Aorta (tissue), 5 donors: ENCODE measurements at regions of chr18 and their contacts with region 1.

Region 1: DNA sequence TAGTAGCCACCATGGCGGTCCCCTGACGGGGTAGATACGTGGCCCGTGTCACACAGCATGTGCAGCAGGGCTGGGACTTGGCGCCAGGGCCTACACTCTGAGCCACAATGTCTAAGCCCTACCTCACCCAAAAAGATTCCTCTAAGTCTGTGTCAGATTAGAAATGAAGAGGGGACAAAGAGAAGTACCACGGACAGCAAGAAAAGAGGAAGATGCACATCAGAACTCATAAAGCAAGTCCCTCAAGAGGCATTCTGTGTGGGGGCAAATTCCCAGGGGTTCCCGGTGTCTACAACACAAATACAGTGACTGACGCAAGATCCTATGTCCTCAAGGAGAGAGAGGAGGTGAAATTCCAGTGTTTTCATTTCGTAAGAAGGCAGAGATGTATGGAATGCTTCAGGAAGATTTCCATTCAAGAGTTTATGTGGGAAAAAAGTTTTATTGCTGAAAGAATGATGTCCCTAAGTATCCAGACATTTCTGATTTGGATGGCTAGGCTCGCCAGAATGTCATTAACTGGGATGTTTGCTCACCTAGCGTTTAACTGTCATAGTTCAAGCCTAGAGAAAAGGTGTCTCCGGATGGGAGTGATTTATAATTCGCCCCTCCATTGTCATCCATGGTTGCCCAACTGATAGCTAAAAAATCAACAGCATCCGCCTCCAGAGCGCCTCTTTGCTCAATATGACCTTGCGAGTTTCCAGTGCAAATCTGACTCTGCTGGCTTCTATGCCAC is 75.6 kb upstream of the CHMP1B start:
- DNase-seq: no peak
- ATAC-seq: no peak
- H3K4me3 ChIP-seq: no peak overlapping the region
- H3K27ac ChIP-seq: no peak overlapping the region
- H3K4me1 ChIP-seq: no peaks in the 10 kb centered on the region
- H3K27me3 ChIP-seq: no peaks in the 10 kb centered on the region

Region 2: DNA sequence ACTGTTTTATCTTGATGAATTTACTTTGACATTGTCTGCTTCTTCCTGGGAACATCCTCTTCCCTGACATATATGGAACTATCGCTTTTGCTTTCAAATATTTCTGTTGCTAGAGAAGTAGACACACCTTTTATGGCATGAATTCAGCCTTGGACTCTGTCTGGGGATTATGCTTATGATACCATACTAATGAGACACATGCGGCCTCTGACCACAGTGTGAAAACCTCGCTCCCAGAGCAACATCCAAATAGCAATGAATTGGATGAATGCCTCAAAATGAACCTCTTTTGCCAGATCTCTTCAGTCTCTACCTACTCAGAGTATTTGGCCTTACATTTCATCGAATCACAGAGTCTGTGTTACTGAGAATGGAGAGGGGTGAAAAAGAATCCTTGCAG is 697.1 kb before region 1 on chr18:
- intact Hi-C with region 1: no loop called
- DNase-seq: no peak
- ATAC-seq: no peak
- H3K4me3 ChIP-seq: no peak overlapping the region
- H3K27ac ChIP-seq: no peak overlapping the region
- H3K4me1 ChIP-seq: no peaks in the 10 kb centered on the region
- H3K27me3 ChIP-seq: no peaks in the 10 kb centered on the region

Region 3: GRCh38 chr18:11695736-11696135 is 79.9 kb before region 1 on chr18:
- intact Hi-C with region 1: loop called in 1 of 2 experiments (anchors 2 kb)
- DNase-seq: no peak
- ATAC-seq: no peak
- H3K4me3 ChIP-seq: no peak overlapping the region
- H3K27ac ChIP-seq: no peak overlapping the region
- H3K4me1 ChIP-seq: no peaks in the 10 kb centered on the region
- H3K27me3 ChIP-seq: no peaks in the 10 kb centered on the region